Activated naive CD4-positive, alpha-beta T cell treated with anti-CD3 and anti-CD28 coated beads for 36 hours (primary cell): ENCODE measurements at regions of chr17 and their contacts with region 1.

Region 1: GRCh38 chr17:2054512-2055291 is at the start of gene HIC1:
- DNase-seq: peak; percentile 79
- H3K4me3 Mint-ChIP-seq: peak within 1 kb of the TSS; percentile 73
- H3K27ac Mint-ChIP-seq: peak within 1 kb of the TSS; percentile 36
- H3K4me1 Mint-ChIP-seq: peaks cover 10% of the 10 kb centered on the region
- H3K27me3 Mint-ChIP-seq: peaks cover 15% of the 10 kb centered on the region
- total RNA-seq, gene HIC1: 14.8 TPM

Region 2: DNA sequence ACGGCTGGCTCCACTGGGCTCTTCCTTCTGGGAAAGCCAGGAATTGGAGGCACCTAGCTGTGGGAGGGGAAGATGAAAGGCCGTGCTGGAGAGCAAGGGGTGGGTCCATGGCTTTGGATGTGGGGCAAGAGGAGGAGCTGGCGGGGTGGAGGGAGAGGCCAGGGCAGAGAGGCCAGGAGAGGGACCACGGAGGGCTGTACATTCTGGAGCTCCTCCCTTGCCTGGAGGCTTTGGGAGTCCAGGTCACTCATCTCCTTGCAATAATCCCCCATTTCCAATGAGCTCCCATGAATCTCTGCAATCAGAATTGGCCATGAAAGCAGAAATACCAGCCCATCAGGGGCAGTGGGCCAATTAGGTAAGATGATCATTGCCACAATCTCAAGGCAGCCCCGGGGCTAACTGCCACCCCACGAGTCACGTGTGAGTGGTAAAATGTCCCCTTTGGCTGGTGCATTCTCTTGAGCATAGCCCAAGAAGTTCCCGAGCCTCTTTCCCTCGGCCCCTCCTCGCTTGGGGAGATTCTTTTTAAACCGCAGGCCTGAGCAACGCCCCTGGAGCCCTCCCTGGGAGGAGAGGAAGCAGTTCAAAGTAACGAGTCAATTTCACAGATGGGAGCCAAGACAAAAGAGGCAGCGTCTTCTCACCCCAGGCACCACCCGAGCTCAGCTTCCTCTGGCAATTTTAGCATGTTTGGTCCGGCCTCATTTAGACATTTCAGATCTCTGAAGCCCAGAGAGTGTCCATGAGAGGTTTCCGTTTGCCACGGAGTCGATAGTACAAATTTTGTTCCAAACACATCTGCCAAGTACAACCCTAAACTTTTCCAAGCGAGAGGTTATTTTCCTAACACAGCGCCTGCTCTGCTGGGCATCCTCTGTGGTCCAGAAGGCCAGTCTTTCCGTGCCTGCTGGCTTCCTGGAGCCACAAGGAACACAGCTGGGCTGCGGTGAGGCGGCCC is 43.0 kb before region 1 on chr17:
- CTCF ChIA-PET with region 1: no interaction called
- intact Hi-C with region 1: no loop called
- DNase-seq: no peak
- H3K4me3 Mint-ChIP-seq: no peak overlapping the region
- H3K27ac Mint-ChIP-seq: no peak overlapping the region
- H3K4me1 Mint-ChIP-seq: no peaks in the 10 kb centered on the region
- H3K27me3 Mint-ChIP-seq: peaks cover 7% of the 10 kb centered on the region

Region 3: DNA sequence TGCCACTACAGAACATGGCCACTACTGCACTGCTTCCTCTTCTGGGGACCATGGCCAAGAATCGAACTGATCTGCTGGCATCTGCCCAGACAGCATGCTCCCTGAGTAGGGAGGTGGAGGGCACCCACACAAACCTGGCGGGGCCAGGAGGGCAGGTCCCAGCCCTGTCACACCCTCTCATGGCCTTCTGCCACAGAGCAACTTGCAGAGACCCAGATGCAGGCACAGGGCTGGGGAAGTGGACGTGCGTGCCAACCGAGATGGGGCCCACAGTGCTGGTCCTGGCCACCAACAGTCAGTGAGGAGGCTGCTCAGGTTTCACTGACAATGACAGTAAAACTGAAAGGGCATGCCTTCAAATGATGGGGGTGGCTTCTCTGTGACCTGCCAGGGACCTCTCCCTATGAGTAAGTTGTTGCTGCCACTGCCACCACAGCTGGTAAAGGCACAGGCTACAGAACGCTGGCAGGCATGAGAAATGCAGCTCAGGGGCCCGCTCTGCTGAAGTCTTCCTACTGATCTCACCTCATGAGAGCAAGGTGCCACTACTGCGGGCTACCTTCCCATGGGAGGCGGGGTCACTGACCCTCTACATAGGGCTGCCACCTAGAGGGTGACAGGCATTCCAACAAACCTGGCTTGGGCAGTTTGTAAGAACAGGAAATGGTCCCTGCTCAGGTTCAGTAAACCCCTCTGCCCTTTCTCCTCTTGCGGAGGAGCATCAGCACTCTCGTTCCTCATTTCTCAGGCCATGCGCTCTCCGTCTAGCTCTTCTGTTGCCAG is 15.7 kb after region 1 on chr17:
- CTCF ChIA-PET with region 1: interaction called, 10 read pairs
- intact Hi-C with region 1: no loop called
- DNase-seq: peak; percentile 87
- H3K4me3 Mint-ChIP-seq: peak overlapping the region; percentile 22
- H3K27ac Mint-ChIP-seq: peak overlapping the region; percentile 43
- H3K4me1 Mint-ChIP-seq: peaks cover 32% of the 10 kb centered on the region
- H3K27me3 Mint-ChIP-seq: no peaks in the 10 kb centered on the region

Region 4: DNA sequence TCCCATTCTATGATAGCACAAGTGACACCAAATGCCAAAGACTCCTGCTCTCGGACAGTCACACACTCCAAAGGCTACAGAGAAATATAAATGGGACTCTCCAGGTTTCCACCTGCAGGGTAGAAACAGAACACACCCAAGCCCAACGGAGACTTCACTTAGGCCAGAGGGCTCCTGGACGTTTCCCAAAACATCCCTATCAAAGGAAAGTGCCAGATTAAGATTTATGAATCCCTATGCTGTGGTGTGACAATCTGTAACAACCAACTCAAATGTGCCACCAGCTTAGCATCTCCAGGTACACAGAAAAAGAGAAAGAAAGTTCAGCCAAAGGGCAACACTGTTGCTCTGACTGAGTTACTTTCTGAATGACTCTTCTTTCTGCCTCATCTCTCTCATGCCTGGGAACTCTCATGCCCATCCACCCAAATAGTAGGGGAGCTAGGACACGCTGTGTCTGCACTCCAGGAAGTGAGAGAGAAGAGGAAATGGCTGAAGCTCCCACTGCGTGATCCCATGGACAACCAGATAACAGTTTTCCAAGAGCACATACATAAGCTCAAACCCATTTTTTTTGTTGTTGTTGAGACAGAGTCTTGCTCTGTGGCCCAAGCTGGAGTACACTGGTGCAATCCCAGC is 199.2 kb after region 1 on chr17:
- CTCF ChIA-PET with region 1: interaction called, 11 read pairs
- intact Hi-C with region 1: no loop called
- DNase-seq: peak; percentile 70
- H3K4me3 Mint-ChIP-seq: peak overlapping the region; percentile 43
- H3K27ac Mint-ChIP-seq: peak overlapping the region; percentile 91
- H3K4me1 Mint-ChIP-seq: peaks cover 65% of the 10 kb centered on the region
- H3K27me3 Mint-ChIP-seq: no peaks in the 10 kb centered on the region

Region 5: GRCh38 chr17:2282297-2282873 is 227.7 kb after region 1 on chr17:
- CTCF ChIA-PET with region 1: interaction called, 20 read pairs
- intact Hi-C with region 1: loop called (anchors 1 kb)
- DNase-seq: no peak
- H3K4me3 Mint-ChIP-seq: no peak overlapping the region
- H3K27ac Mint-ChIP-seq: peak overlapping the region; percentile 38
- H3K4me1 Mint-ChIP-seq: peaks cover 29% of the 10 kb centered on the region
- H3K27me3 Mint-ChIP-seq: no peaks in the 10 kb centered on the region

Region 6: DNA sequence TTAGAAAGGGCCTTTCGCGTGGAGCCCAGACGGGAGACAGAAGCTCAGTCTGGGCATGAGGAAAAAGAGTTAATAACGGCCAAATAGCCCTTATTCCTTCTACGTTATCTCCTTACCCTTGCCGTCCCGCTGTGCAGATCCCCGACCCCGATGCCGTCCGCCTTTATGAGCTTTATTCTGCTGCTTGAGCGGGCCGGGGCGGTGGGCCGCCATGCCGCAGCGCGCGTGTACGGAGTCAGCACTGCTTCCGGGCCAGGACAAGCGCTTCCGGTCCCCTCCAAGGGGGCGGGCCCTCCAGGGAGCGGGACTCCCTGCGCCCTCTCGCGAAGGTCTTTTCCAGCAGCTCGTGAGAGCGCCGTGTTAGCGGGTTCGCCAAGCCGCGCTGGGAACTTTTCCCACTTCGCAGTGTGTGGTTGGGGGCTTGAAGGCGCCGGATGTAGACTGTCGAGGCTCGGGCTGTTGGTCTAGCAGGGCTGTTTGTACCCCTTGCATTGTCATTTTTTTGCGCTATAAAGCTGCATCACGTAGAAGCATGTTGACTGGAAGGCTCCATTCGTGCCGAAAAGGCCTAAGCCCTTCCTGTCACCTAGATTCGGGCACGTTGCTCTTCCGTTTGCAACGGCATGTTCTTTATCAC is 281.6 kb after region 1 on chr17 and contains the start of gene TSR1:
- CTCF ChIA-PET with region 1: interaction called, 7 read pairs
- intact Hi-C with region 1: loop called (anchors 1 kb)
- DNase-seq: peak; percentile 93
- H3K4me3 Mint-ChIP-seq: peak within 1 kb of the TSS; percentile 100
- H3K27ac Mint-ChIP-seq: peak within 1 kb of the TSS; percentile 96
- H3K4me1 Mint-ChIP-seq: peaks cover 15% of the 10 kb centered on the region
- H3K27me3 Mint-ChIP-seq: no peaks in the 10 kb centered on the region
- total RNA-seq, gene TSR1: 51.1 to 51.5 TPM

Region 7: DNA sequence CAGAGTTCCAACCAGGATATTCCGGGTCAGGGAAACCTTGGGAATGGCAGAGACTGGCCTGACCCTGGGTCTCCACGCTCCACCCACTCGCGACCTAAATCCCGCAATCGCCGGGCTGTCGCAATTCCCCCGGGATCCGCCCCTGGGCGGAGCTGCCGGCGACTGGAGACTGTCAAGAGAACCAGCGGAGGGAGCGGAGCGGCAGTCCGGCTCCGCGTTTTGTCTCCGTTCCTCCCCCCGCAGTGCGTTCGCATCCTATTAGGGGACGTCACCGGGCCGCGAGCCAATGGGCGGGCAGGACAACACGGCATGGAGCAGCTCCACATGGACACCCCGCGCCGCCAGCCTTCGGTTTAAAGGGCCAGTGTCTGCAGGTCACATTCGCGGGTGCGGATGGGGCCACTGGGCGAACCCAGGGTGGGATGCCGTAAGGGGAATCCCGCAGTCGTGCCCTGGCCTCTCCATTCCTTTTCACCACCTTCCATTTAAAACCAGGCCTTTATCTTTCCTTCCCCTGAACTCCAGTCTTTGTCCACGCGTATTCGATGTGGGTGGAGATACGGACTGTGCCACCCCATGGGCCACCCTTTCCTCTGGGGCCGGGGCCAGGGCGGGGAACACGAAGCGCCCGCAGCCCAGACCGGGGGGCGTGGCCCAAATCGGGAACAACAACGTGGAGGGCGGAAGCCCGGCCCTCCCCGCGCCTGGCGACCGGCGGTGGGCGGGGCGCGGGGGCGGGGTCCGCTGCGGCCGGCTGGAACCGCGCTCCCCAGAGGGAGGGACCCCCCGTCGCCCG is 346.9 kb after region 1 on chr17:
- CTCF ChIA-PET with region 1: no interaction called
- intact Hi-C with region 1: loop called (anchors 5 kb)
- DNase-seq: peak; percentile 100
- H3K4me3 Mint-ChIP-seq: peak overlapping the region; percentile 98
- H3K27ac Mint-ChIP-seq: peak overlapping the region; percentile 96
- H3K4me1 Mint-ChIP-seq: peaks cover 37% of the 10 kb centered on the region
- H3K27me3 Mint-ChIP-seq: no peaks in the 10 kb centered on the region